Sciatic nerve (tissue), 2 donors: ENCODE measurements at regions of chr12 and their contacts with region 1.

Region 1: GRCh38 chr12:105992849-105993740 is 145.7 kb downstream of the NUAK1 start:
- DNase-seq: peak; percentile 72
- ATAC-seq: peak; percentile 89

Region 2: GRCh38 chr12:105670672-105671071 is 322.4 kb before region 1 on chr12:
- intact Hi-C with region 1: no loop called
- DNase-seq: no peak
- ATAC-seq: no peak

Region 3: DNA sequence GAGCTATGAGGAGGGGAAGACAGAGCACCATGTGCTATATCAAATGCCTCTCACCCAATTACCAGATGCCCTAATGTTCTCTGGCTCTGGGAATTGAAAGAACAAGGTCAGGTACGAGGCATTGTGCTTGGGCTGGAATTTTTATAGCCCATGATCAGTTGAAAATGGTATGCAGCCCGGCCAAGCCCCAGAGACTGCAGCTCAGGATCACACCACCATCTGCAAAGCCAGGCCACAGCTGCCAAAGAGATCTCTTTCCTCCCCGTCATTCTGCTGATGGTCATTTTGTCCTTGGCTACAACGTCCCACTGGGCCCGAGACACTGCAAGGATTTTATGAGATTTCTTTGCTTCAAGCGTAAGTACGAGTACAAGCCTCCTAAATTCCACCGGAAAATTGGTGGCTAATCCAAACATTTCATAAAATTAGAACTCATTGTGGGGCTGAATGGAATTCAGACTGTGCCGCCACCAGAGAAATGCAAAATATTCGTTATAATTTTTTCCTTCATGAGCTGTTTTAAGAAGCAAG is 130.5 kb after region 1 on chr12:
- intact Hi-C with region 1: loop called (anchors 10 kb)
- DNase-seq: no peak
- ATAC-seq: peak; percentile 81